Aorta (tissue), 5 donors: ENCODE measurements at regions of chr3 and their contacts with region 1.

Region 1: GRCh38 chr3:73624821-73625665 is at the start of gene PDZRN3:
- DNase-seq: peak; percentile 79 to 92
- ATAC-seq: peak; percentile 86
- H3K4me3 ChIP-seq: peak within 1 kb of the TSS; percentile 78 to 99
- H3K27ac ChIP-seq: peak within 1 kb of the TSS; percentile 58 to 91
- H3K4me1 ChIP-seq: peaks cover 1 to 4% of the 10 kb centered on the region in 2 donors
- H3K27me3 ChIP-seq: no peaks in the 10 kb centered on the region
- total RNA-seq, gene PDZRN3: 62.6 to 86.3 TPM

Region 2: DNA sequence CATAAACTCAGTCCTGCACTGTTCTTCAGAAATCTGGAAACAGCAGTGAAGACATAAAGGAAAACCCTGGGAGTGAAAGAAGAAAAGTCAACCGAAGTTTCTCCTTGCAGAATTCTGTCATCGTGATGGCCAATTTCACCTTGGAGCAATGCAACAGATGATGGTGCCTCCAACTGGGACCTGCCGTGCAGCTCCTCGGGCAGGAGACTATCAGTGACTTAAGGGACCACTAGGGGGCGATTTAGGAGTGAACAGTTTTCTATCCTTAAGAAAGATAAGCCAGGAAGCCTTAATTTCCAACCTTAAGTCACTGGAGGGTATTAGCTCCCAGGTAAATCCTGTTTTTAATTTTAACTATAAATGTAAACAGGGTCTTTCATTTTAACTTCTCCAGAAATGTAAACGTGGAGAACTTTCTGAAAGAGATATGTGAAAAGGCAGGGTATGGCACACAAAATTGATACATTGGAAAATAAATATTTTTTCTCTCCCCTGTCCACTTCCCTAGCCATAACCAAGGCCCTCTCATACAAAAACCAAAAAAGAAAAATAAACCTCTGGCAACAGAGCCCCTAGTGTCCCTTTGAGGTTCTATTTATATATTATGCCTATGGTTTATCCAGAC is 116.6 kb before region 1 on chr3:
- intact Hi-C with region 1: loop called (anchors 5 kb)
- DNase-seq: no peak
- ATAC-seq: peak; percentile 76
- H3K4me3 ChIP-seq: no peak overlapping the region
- H3K27ac ChIP-seq: peak overlapping the region; percentile 64 to 78
- H3K4me1 ChIP-seq: peaks cover 6 to 24% of the 10 kb centered on the region in 2 donors
- H3K27me3 ChIP-seq: no peaks in the 10 kb centered on the region

Region 3: DNA sequence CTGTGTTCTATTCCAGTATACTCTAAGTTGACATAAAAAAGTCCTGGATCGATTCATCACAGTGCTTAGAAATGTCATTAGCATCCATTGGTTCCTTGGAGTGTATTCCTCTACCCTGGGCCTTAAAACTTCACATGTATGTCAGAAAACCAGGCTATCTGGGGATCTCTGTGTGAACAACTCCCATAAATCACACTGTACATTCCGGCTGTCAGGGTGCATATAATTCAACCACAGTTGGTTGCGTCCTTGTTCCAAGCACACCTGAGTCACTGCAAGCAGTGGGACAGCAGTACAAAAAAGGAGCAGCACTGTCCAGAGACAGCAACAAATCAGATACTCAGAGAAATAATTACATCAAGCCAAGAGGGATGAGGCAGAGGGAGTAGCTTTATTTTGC is 52.7 kb before region 1 on chr3:
- intact Hi-C with region 1: loop called in 1 of 2 experiments (anchors 5 kb)
- DNase-seq: no peak
- ATAC-seq: no peak
- H3K4me3 ChIP-seq: no peak overlapping the region
- H3K27ac ChIP-seq: peak overlapping the region in 1 of 2 donors; percentile 16
- H3K4me1 ChIP-seq: peaks cover 7 to 14% of the 10 kb centered on the region in 2 donors
- H3K27me3 ChIP-seq: no peaks in the 10 kb centered on the region

Region 4: GRCh38 chr3:73766599-73767381 is 141.7 kb after region 1 on chr3:
- intact Hi-C with region 1: loop called in 1 of 2 experiments (anchors 5 kb)
- DNase-seq: peak in 1 of 2 donors; percentile 41
- ATAC-seq: peak; percentile 64
- H3K4me3 ChIP-seq: peak overlapping the region in 1 of 2 donors; percentile 87
- H3K27ac ChIP-seq: peak overlapping the region; percentile 74 to 90
- H3K4me1 ChIP-seq: peaks cover 2 to 5% of the 10 kb centered on the region in 2 donors
- H3K27me3 ChIP-seq: no peaks in the 10 kb centered on the region

Region 5: DNA sequence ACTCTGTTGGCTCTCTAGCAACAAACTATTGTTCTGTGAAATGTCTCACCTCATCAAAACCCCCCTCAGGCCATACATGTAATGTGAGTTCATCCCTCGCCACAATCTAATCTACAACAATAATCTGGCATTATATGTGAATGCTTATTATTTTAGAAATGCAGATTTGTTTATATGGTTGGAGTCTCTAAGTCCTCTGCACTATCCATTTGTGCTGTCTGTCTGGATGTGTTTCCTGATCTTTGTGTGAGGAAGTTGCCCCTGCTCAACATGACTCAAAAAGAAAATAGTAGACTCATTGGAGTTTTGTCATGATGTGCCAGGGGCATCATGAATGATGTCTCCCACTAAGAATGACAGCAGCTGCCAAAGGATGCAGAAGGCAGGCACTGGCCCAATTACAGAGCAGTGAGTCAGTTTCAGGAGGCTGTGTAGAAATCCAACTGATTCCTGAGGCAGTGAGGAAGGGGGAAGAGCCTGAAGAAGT is 161.3 kb after region 1 on chr3:
- intact Hi-C with region 1: loop called in 1 of 2 experiments (anchors 10 kb)
- DNase-seq: peak; percentile 80 to 84
- ATAC-seq: peak; percentile 80
- H3K4me3 ChIP-seq: no peak overlapping the region
- H3K27ac ChIP-seq: peak overlapping the region; percentile 43 to 62
- H3K4me1 ChIP-seq: peaks cover 4 to 9% of the 10 kb centered on the region in 2 donors
- H3K27me3 ChIP-seq: no peaks in the 10 kb centered on the region

Region 6: GRCh38 chr3:73848173-73848906 is 223.3 kb after region 1 on chr3:
- intact Hi-C with region 1: loop called (anchors 1 to 5 kb)
- DNase-seq: no peak
- ATAC-seq: no peak
- H3K4me3 ChIP-seq: no peak overlapping the region
- H3K27ac ChIP-seq: no peak overlapping the region
- H3K4me1 ChIP-seq: no peaks in the 10 kb centered on the region
- H3K27me3 ChIP-seq: no peaks in the 10 kb centered on the region